Naive thymus-derived CD4-positive, alpha-beta T cell (primary cell): ENCODE measurements at regions of chr19 and their contacts with region 1.

Region 1: GRCh38 chr19:17511724-17512573 is 500 bp downstream of the PGLS start:
- DNase-seq: peak; percentile 75 to 93 (median 90)
- ATAC-seq: peak; percentile 89
- H3K4me3 ChIP-seq: peak overlapping the region; percentile 75
- H3K4me3 Mint-ChIP-seq: peak overlapping the region; percentile 89 to 100 (median 99)
- H3K27ac ChIP-seq: peak overlapping the region; percentile 98
- H3K27ac Mint-ChIP-seq: peak overlapping the region; percentile 86 to 96 (median 92)
- H3K4me1 ChIP-seq: peaks cover 0 to 20% of the 10 kb centered on the region in 2 donors
- H3K4me1 Mint-ChIP-seq: peaks cover 26 to 46% (median 41%) of the 10 kb centered on the region in 7 donors
- H3K27me3 ChIP-seq: no peaks in the 10 kb centered on the region
- H3K27me3 Mint-ChIP-seq: no peaks in the 10 kb centered on the region

Region 2: GRCh38 chr19:17183858-17184321 is 328.1 kb before region 1 on chr19:
- CTCF ChIA-PET with region 1: no interaction called
- POLR2A ChIA-PET with region 1: no interaction called
- intact Hi-C with region 1: no loop called
- DNase-seq: peak in 6 of 9 donors; percentile 18 to 41 (median 34)
- ATAC-seq: peak; percentile 64
- H3K4me3 ChIP-seq: peak overlapping the region; percentile 75
- H3K4me3 Mint-ChIP-seq: peak overlapping the region; percentile 82 to 94 (median 89)
- H3K27ac ChIP-seq: peak overlapping the region; percentile 68
- H3K27ac Mint-ChIP-seq: peak overlapping the region; percentile 85 to 99 (median 96)
- H3K4me1 ChIP-seq: peaks cover 13 to 16% of the 10 kb centered on the region in 2 donors
- H3K4me1 Mint-ChIP-seq: peaks cover 16 to 29% (median 20%) of the 10 kb centered on the region in 7 donors
- H3K27me3 ChIP-seq: no peaks in the 10 kb centered on the region
- H3K27me3 Mint-ChIP-seq: no peaks in the 10 kb centered on the region

Region 3: DNA sequence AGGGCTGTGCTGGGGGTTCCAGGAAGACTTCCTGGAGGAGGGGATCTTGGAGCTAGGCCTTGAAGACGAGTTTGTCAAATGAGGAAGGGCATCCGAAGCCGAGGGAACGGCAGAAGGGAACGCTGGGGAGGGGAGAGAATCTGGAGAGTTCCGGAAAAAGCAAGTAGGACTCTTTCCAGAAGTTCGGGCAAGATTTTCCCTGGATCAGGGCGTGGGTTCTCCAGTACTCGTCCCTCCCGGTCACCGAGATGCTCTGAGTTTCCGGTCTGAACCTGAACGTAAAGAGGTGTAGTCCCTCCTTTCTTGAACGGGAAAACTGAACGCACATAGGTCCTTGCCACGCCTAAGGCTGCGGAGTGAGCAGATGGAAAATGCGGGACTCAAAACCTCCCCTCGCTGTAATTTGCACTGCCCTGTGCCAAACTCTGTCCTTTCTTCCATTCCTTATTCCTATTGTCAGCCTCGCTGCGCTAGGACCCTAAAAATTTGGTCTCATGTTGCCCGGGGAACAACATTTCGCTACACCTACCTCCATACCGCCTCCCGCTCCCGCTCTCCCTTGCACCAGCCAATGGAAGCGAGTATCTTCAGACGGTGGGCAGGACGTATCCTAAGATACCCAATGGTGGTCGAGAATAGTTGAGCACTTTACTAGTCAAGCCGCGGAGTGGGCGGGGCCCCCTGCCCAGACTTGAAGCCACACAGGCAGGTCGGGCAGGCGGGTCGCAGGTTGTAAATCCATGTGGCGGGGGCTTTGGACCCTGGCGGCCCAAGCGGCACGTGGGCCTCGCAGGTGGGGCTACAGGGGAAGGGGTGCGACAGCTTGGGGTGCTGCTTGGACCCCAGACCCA is 174.9 kb before region 1 on chr19 and contains the start of gene GTPBP3:
- CTCF ChIA-PET with region 1: no interaction called
- POLR2A ChIA-PET with region 1: no interaction called
- intact Hi-C with region 1: loop called (anchors 1 kb)
- DNase-seq: peak; percentile 84 to 99 (median 95)
- ATAC-seq: peak; percentile 96
- H3K4me3 ChIP-seq: peak within 1 kb of the TSS; percentile 76
- H3K4me3 Mint-ChIP-seq: peak within 1 kb of the TSS; percentile 86 to 96 (median 92)
- H3K27ac ChIP-seq: peak within 1 kb of the TSS; percentile 79
- H3K27ac Mint-ChIP-seq: peak within 1 kb of the TSS; percentile 78 to 95 (median 93)
- H3K4me1 ChIP-seq: peaks cover 16 to 22% of the 10 kb centered on the region in 2 donors
- H3K4me1 Mint-ChIP-seq: peaks cover 22 to 55% (median 27%) of the 10 kb centered on the region in 7 donors
- H3K27me3 ChIP-seq: no peaks in the 10 kb centered on the region
- H3K27me3 Mint-ChIP-seq: no peaks in the 10 kb centered on the region
- total RNA-seq, gene GTPBP3: 29.6 to 59.8 (median 40.4) TPM

Region 4: GRCh38 chr19:17470068-17470841 is 41.7 kb before region 1 on chr19 and contains the start of gene SLC27A1:
- CTCF ChIA-PET with region 1: no interaction called
- POLR2A ChIA-PET with region 1: interaction called, 5 read pairs
- intact Hi-C with region 1: loop called (anchors 1 kb)
- DNase-seq: peak; percentile 76 to 90 (median 84)
- ATAC-seq: peak; percentile 84
- H3K4me3 ChIP-seq: peak within 1 kb of the TSS; percentile 96
- H3K4me3 Mint-ChIP-seq: peak within 1 kb of the TSS; percentile 92 to 100 (median 96)
- H3K27ac ChIP-seq: peak within 1 kb of the TSS; percentile 77
- H3K27ac Mint-ChIP-seq: peak within 1 kb of the TSS; percentile 74 to 98 (median 93)
- H3K4me1 ChIP-seq: peaks cover 6 to 22% of the 10 kb centered on the region in 2 donors
- H3K4me1 Mint-ChIP-seq: peaks cover 22 to 38% (median 30%) of the 10 kb centered on the region in 7 donors
- H3K27me3 ChIP-seq: no peaks in the 10 kb centered on the region
- H3K27me3 Mint-ChIP-seq: peaks cover 0 to 22% (median 0%) of the 10 kb centered on the region in 5 donors
- total RNA-seq, gene SLC27A1: 3.1 to 15.1 (median 11.0) TPM

Region 5: GRCh38 chr19:17522988-17523872 is 11.3 kb after region 1 on chr19:
- CTCF ChIA-PET with region 1: interaction called, 3 read pairs
- POLR2A ChIA-PET with region 1: interaction called, 29 read pairs
- intact Hi-C with region 1: loop called in 1 of 2 experiments (anchors 1 kb)
- DNase-seq: peak in 7 of 9 donors; percentile 26 to 51 (median 45)
- ATAC-seq: peak; percentile 86
- H3K4me3 ChIP-seq: peak overlapping the region; percentile 21
- H3K4me3 Mint-ChIP-seq: peak overlapping the region; percentile 74 to 86 (median 80)
- H3K27ac ChIP-seq: peak overlapping the region; percentile 64
- H3K27ac Mint-ChIP-seq: peak overlapping the region; percentile 87 to 98 (median 93)
- H3K4me1 ChIP-seq: peaks cover 10 to 23% of the 10 kb centered on the region in 2 donors
- H3K4me1 Mint-ChIP-seq: peaks cover 16 to 32% (median 26%) of the 10 kb centered on the region in 7 donors
- H3K27me3 ChIP-seq: no peaks in the 10 kb centered on the region
- H3K27me3 Mint-ChIP-seq: no peaks in the 10 kb centered on the region

Region 6: DNA sequence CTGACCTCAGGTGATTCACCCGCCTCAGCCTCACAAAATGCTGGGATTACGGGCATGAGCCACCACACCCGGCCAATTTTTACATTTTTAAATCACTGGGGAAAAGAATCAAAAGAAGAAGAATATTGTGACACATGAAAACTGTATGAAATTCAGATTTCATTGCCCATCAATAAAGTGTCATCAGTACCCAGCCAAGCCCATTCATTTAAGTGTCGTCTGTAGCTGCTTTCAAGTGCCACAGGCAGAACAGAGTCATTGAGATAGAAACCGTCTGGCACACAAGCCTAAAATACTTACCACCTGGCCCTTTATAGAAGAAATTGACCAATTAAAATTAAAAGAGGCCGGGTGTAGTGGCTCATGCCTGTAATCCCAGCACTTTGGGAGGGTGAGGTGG is 58.8 kb after region 1 on chr19:
- CTCF ChIA-PET with region 1: no interaction called
- POLR2A ChIA-PET with region 1: no interaction called
- intact Hi-C with region 1: loop called (anchors 1 to 5 kb)
- DNase-seq: no peak
- ATAC-seq: no peak
- H3K4me3 ChIP-seq: no peak overlapping the region
- H3K4me3 Mint-ChIP-seq: no peak overlapping the region
- H3K27ac ChIP-seq: no peak overlapping the region
- H3K27ac Mint-ChIP-seq: no peak overlapping the region
- H3K4me1 ChIP-seq: no peaks in the 10 kb centered on the region
- H3K4me1 Mint-ChIP-seq: peaks cover 0 to 3% (median 3%) of the 10 kb centered on the region in 7 donors
- H3K27me3 ChIP-seq: no peaks in the 10 kb centered on the region
- H3K27me3 Mint-ChIP-seq: no peaks in the 10 kb centered on the region

Region 7: DNA sequence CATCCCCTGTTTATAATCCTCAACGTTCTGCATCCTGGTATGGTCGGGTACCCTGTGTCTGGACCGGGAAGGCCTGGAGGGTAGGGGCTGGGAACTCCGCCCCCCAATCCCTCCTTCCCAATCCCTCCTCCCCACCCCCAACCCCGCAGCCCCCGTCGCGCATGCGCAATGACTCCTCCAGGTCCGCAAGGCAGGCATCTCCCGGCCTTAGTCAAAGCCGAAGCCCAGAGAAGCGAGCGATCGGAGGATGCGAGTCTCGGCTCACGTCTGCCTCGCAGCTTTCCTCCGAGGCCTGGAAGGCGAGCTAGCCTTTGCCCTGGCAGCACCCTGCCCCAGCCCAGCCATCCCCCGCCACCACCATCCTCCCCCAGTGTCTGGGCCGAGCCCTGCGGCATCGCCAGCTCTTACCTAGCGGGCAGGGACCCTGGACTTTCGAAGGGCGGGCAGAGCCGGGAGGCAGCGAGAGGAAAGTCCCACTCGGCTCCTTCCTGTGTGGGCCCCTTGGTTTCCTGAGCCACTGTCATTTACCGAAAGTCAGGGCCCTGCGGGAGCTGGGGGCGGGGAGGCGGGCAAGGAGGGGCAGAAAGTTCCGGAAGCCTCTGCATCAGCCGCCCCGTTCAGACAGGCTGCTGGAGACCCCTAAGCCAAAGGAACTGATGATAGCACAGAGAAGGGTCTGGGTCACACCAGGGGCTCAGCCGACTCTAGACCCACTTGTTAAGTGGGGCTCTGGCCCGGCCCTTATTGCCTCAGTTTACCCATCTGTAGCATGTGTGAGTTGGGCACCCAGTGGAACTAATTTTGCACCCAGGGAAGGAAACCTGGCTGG is 335.8 kb after region 1 on chr19 and contains the start of gene JAK3:
- CTCF ChIA-PET with region 1: no interaction called
- POLR2A ChIA-PET with region 1: no interaction called
- intact Hi-C with region 1: loop called in 1 of 2 experiments (anchors 5 kb)
- DNase-seq: peak; percentile 66 to 91 (median 88)
- ATAC-seq: peak; percentile 89
- H3K4me3 ChIP-seq: peak within 1 kb of the TSS; percentile 86
- H3K4me3 Mint-ChIP-seq: peak within 1 kb of the TSS; percentile 87 to 97 (median 93)
- H3K27ac ChIP-seq: peak within 1 kb of the TSS; percentile 95
- H3K27ac Mint-ChIP-seq: peak within 1 kb of the TSS; percentile 92 to 100 (median 97)
- H3K4me1 ChIP-seq: peaks cover 55 to 70% of the 10 kb centered on the region in 2 donors
- H3K4me1 Mint-ChIP-seq: peaks cover 45 to 77% (median 65%) of the 10 kb centered on the region in 7 donors
- H3K27me3 ChIP-seq: no peaks in the 10 kb centered on the region
- H3K27me3 Mint-ChIP-seq: peaks cover 0 to 2% (median 0%) of the 10 kb centered on the region in 5 donors
- total RNA-seq, gene JAK3: 154 to 296 (median 202) TPM